PC-3 (cell line): ENCODE measurements at regions of chr1 and their contacts with region 1.

Region 1: GRCh38 chr1:226626577-226626956 is 78.0 kb downstream of the STUM start:
- DNase-seq: peak; percentile 88
- ATAC-seq: peak; percentile 79
- H3K4me3 ChIP-seq: no peak overlapping the region
- H3K27ac ChIP-seq: no peak overlapping the region
- H3K4me1 ChIP-seq: peaks cover 13% of the 10 kb centered on the region
- H3K27me3 ChIP-seq: no peaks in the 10 kb centered on the region
- CTCF ChIP-seq: peak; percentile 100

Region 2: DNA sequence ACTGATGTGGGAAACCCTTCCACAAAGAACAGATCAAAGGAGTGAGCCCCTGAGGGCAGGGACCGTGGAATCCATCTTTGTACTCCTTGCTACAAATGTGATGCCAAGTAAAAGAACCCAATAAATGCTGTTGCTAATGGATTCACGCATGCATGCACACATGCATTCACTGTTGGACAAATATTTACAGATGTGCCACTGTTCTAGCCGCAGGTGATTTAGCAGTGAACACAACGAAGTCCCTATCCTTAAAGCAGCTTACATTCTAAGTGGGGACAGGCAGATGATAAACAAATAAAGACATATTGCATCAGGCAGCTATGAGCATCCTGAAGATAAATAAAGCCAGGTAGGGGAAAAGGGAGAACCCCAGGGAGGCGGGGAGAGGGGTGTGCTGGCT is 44.7 kb after region 1 on chr1:
- CTCF ChIA-PET with region 1: no interaction called
- POLR2A ChIA-PET with region 1: no interaction called
- intact Hi-C with region 1: no loop called
- DNase-seq: peak; percentile 52
- ATAC-seq: peak; percentile 18; the same call in 1 of the 2 replicates
- H3K4me3 ChIP-seq: no peak overlapping the region
- H3K27ac ChIP-seq: no peak overlapping the region
- H3K4me1 ChIP-seq: peaks cover 12% of the 10 kb centered on the region
- H3K27me3 ChIP-seq: no peaks in the 10 kb centered on the region
- CTCF ChIP-seq: no peak

Region 3: DNA sequence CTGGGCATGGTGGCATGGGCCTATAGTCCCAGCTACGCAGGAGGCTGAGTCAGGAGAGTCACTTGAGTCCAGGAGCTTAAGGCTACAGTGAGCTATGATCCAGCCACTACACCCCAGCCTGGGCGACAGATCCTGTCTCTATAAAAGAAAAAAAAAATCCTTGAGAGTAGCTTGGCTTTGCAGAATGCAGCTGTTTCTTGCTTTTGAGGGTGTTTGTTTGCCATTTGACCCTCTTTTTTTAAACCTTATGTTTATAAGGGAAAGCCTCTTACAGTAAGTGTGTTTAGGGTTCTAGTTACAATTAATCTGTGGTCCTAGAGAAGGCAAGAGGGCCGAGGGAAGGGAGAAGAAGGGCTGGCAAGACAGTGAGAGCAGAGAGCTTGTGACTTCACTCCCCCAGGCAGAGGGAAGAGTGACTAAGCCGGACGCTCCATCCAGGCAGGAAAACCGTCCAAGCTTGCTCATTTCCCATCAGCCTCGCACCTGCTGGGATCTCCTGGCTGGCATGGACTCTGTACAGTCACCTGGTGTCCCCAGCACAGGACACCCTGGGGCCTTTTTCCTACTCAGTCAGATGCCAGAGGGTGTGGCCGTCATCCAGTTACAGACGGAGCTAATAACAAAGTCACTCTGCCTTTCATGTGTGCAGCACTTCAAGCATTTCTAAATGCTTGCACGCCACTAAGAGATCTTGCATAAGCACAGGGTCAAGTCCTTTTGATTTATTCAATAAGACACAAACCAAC is 188.4 kb after region 1 on chr1:
- CTCF ChIA-PET with region 1: interaction called, 21 read pairs
- POLR2A ChIA-PET with region 1: no interaction called
- intact Hi-C with region 1: no loop called
- DNase-seq: peak; percentile 100
- ATAC-seq: peak; percentile 97
- H3K4me3 ChIP-seq: peak overlapping the region; percentile 8; the same call in 1 of the 2 replicates
- H3K27ac ChIP-seq: peak overlapping the region; percentile 90
- H3K4me1 ChIP-seq: peaks cover 35% of the 10 kb centered on the region
- H3K27me3 ChIP-seq: no peaks in the 10 kb centered on the region
- CTCF ChIP-seq: no peak